Colonic mucosa (tissue), 4 donors: ENCODE measurements at regions of chr4 and their contacts with region 1.

Region 1: DNA sequence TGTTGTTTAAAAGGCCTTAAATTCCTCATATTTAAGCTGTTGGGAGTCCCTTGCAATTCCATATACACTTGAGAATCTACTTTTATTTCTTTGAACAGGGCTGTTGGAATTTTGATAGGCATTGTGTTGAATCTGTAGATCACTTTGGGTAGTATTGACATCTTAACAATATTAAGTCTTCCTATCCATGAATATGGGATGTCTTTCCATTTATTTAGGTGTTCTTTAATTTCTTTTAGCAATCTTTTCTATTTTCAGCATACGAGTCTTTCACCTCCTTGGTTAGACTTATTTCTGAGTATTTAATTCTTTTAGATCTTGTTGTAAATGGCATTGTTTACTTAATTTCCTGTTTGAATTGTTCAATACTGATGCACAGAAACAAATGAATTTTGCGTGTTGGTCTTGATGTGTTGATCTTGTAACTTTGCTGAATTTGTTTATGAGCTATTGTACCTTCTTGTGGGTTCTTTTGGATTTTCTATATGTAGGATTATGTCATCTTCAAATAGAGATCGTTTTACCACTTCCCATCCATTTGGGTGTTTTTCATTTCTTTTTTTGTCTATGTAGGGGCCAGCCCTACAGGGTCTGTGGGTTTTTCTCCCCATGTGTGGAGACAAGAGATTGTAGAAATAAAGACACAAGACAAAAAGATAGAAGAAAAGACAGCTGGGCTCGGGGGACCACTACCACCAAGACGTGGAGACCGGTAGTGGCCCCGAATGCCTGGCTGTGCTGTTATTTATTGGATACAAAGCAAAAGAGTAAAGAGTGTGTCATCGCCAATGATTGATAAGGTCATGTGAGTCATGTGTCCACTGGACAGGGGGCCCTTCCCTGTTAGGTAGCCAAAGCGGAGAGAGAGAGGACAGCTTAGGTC is 18.2 kb upstream of the CTBP1 start:
- DNase-seq: no peak
- H3K4me3 ChIP-seq: no peak overlapping the region
- H3K27ac ChIP-seq: no peak overlapping the region
- H3K4me1 ChIP-seq: no peaks in the 10 kb centered on the region
- H3K27me3 ChIP-seq: no peaks in the 10 kb centered on the region
- CTCF ChIP-seq: no peak

Region 2: DNA sequence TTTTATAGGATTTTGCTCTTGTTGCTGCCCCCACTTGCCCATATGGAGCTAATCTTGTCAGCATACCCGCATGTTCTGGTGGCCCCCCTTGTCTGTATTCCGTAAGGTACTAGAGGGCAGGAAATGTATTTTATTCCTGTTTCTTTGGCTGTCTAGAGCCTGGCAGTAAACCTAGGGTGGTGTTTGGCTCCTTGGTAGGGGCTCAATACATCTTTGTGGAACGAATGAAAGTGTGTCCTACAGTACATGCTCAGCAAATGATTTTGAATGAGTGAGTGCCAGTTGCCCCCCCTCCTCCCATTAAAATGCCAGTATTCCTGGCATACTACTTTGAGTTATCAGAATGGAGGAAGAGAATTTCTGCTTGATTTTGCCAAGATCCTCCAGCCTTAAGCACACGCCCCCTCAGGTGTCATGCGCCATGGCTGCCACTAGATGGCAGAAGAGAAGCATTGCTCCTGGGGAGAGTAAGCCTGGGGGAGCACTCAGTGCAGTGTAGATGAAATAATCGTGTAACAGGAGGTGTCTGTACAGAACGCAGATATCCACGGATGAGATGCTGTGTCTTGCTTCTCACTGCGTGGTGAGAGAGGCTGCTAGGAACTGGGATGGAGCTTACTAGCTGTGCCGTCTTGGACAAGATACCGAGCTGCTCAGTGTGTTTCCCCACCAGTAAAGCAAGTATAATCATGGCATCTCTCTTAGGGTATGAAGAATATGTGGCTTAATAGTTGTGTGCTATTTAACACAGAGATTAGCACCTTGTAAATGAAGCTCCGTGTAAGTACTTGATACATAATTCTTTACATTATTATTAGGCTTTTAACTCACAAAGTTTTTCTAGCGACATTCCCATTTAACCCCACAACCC is 136.6 kb before region 1 on chr4:
- intact Hi-C with region 1: loop called (anchors 2 kb)
- DNase-seq: peak; percentile 74
- H3K4me3 ChIP-seq: no peak overlapping the region
- H3K27ac ChIP-seq: no peak overlapping the region
- H3K4me1 ChIP-seq: no peaks in the 10 kb centered on the region
- H3K27me3 ChIP-seq: no peaks in the 10 kb centered on the region
- CTCF ChIP-seq: peak; percentile 99